BJ (cell line): ENCODE measurements at regions of chr12 and their contacts with region 1.

Region 1: DNA sequence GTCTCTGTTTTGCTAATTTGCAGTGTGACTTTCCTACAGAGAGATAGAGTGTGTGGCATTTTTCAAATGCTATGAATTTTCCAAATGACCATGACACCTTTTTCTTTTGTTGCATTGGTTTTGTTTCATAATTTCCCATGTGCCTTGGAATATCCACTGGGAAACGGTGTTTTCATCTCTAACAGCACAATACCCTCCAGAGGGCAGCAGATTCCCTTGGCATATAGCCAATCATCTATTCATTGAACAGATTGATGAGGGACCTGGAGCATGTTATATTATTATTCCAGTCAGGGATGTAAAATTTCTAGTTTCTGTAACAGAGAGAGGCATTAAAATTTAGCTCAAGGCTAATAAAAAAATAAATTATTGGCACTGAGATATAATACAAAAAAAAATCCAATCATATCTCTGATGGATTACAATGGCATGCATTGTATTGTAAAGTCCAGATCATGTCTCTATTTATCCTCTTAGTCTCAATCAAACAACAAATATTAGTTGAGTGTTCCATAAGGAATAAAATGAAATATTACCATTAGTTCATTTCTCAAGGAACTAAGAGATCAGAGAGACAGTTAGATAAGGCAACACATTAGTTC is 29.6 kb upstream of the NTN4 start:
- DNase-seq: no peak
- H3K4me3 ChIP-seq: no peak overlapping the region
- H3K27me3 ChIP-seq: peaks cover 4% of the 10 kb centered on the region; the same call in 1 of the 2 replicates
- CTCF ChIP-seq: peak; percentile 64

Region 2: DNA sequence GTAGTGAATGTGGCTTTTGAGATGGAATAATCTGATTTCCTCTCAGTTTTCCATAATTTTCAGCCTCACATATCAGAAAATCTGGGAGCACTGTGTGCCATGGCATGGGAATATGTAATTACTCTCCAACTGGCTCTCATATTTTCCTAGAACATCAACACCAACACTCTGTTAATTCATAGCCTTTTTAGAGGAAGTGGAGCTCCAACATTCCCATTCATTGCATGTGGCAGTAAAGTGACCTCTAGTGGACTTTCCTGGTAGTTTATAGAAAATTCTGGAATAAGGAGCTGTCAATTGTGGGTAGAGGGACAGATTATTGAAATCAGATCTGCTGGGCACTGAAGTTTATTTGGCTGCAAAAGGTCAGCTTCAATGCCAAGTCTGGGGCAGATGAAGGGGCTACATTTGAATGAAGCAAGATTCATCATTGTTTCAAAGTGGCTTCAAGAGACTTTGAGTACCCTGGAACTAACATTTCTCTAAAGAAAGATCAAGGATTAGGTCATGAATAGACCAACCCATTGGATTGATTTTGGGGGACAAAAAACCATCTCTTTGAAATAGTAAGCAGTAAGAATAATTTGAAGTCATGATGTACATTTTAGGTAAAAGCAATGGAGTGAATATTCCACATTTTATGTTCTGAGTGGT is 245.3 kb before region 1 on chr12:
- CTCF ChIA-PET with region 1: interaction called, 123 read pairs
- POLR2A ChIA-PET with region 1: no interaction called
- DNase-seq: no peak
- H3K4me3 ChIP-seq: no peak overlapping the region
- H3K27me3 ChIP-seq: no peaks in the 10 kb centered on the region; the same call in 1 of the 2 replicates
- CTCF ChIP-seq: peak; percentile 76